ENCODE measurements at regions of chr17 and their contacts with region 1.

Region 1: DNA sequence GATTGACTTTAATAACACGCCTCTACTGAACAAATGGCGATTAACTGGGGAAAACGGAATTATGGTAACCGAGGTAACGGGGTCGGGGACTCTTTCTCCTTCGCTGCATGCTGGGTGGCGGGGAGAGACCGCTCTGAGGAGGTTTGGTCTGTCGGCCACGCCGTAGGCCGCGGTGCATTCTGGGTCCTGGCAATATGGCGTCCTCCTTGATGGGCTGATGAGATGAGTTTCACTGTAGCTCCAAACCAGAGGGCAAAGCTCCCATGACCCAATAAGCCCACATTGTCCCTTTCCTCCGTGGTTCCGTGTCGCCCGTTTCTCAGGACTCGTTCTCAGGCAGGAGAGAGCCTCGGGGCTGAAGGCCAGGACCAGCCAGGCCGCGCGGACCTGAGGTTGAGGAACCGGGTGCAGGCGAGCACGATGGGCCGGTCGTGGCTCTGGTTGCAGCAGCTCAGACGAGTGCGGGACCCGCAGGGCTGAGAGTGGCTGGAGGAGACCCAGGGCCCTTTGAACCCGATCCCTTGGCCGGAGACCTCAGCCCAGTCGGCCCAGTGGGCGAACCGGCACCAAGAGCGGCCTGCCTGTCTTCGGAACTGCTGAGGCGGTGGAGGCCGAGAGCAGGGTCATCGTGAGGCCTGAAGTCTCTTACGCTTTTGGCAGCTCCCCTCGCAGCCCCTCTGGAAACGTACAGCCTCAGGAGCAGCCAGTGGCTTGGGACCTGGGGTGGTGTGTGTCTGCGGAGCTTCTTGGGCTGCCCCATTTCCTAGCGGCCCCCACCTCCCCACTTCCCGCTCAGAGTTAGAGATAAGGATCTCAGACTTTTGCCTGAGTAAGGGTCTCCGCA is at the start of gene RPTOR:
- DNase-seq: peak; percentile 82 to 89 (median 85)
- H3K4me3 ChIP-seq: peak within 1 kb of the TSS; percentile 81 to 85
- H3K4me3 Mint-ChIP-seq: peak within 1 kb of the TSS; percentile 93 to 98 (median 95)
- H3K27ac ChIP-seq: peak within 1 kb of the TSS; percentile 80
- H3K27ac Mint-ChIP-seq: peak within 1 kb of the TSS; percentile 84 to 98 (median 95)
- H3K4me1 ChIP-seq: peaks cover 26% of the 10 kb centered on the region
- H3K4me1 Mint-ChIP-seq: peaks cover 11 to 33% (median 23%) of the 10 kb centered on the region in 4 donors
- H3K27me3 ChIP-seq: no peaks in the 10 kb centered on the region
- H3K27me3 Mint-ChIP-seq: peaks cover 4 to 14% of the 10 kb centered on the region in 2 donors
- total RNA-seq, gene RPTOR: 48.5 to 51.8 TPM

Region 2: GRCh38 chr17:80441133-80441578 is 103.7 kb before region 1 on chr17:
- CTCF ChIA-PET with region 1: no interaction called
- POLR2A ChIA-PET with region 1: no interaction called
- intact Hi-C with region 1: no loop called
- DNase-seq: peak; percentile 40 to 47 (median 43)
- H3K4me3 ChIP-seq: no peak overlapping the region
- H3K4me3 Mint-ChIP-seq: peak overlapping the region in 1 of 8 donors; percentile 45
- H3K27ac ChIP-seq: no peak overlapping the region
- H3K27ac Mint-ChIP-seq: peak overlapping the region in 1 of 7 donors; percentile 9
- H3K4me1 ChIP-seq: no peaks in the 10 kb centered on the region
- H3K4me1 Mint-ChIP-seq: no peaks in the 10 kb centered on the region
- H3K27me3 ChIP-seq: no peaks in the 10 kb centered on the region
- H3K27me3 Mint-ChIP-seq: peaks cover 6 to 11% of the 10 kb centered on the region in 2 donors

Region 3: DNA sequence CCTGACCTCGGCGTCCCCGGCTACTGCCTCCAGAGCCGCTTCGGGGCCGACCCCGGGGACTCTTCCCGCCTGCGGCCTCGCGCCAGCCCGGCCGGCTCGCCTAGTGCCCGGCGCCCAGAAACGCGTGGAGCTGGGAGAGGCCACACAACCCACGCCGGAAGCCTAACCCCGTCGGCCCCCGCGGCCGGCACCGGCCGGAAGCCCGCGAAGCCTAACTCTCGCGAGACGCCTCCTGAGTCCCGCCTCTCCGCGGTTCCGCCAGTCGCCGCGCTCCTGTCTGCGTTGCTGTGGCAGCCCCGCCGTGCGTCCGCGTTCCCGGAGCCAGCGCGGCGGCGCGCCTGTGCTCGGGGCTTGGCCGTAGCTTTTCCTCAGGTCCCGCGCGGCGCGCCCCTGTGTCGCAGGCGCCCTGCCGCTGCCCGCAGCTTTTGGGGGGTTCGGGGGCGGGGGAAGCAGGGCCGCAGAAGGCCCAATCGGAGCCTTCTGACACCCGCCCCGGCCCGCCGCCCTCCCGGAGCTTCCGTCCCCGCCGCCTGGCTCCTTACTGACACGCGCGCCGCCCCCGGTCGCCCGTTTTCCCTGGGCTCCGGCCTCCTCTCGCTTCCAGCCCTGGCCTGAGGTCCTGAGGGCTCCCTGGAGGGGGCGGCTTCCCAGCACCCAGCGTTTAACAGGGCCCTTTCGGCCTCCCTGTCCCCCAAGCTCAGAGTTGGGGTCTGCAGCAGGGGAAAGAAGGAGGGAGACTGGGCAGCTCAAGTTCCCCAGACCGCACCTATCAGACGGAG is 90.1 kb before region 1 on chr17:
- CTCF ChIA-PET with region 1: no interaction called
- POLR2A ChIA-PET with region 1: interaction called, 16 read pairs
- intact Hi-C with region 1: loop called (anchors 1 kb)
- DNase-seq: peak; percentile 92 to 96 (median 95)
- H3K4me3 ChIP-seq: peak overlapping the region; percentile 42 to 66
- H3K4me3 Mint-ChIP-seq: peak overlapping the region; percentile 89 to 93 (median 92)
- H3K27ac ChIP-seq: peak overlapping the region; percentile 93
- H3K27ac Mint-ChIP-seq: peak overlapping the region; percentile 92 to 98 (median 96)
- H3K4me1 ChIP-seq: peaks cover 18% of the 10 kb centered on the region
- H3K4me1 Mint-ChIP-seq: peaks cover 9 to 25% (median 12%) of the 10 kb centered on the region in 4 donors
- H3K27me3 ChIP-seq: no peaks in the 10 kb centered on the region
- H3K27me3 Mint-ChIP-seq: peaks cover 14 to 17% of the 10 kb centered on the region in 2 donors

Region 4: DNA sequence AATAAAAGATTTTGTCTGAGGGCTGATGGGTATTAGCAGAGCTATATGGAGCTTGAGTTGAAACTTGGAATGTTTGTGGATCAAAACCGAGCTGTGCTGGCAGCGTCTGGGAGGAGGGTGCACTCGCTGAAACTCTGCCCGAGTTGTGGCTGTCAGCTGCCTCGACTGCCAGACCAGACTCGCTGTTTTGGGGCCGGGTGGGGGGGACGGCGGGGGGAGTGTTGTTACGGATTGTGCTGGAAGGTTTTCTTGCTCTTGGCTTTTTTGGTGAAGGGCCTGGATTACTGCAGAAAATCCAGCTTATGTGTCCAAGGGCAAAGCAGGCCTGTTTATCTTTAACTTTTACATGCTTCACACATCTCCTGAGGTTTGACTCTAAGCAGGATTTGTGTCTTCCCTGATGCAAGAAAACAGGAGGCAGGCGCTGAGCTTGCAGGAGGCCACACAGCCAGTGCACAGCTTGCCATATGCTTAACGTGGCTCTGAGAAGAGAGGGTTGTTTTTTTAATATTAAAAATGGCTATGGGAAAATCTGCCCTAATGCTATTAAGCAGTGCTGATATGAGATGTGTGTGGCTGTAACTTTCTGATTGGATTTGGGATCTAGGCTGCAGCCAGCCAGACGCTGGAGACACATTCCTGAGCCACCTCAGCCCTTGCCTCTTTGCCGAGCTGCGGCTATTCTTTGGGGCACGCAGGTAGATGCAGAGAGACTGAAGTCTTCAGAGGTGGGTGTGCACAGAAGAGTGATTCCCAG is 20.7 kb before region 1 on chr17:
- CTCF ChIA-PET with region 1: no interaction called
- POLR2A ChIA-PET with region 1: no interaction called
- intact Hi-C with region 1: no loop called
- DNase-seq: no peak
- H3K4me3 ChIP-seq: no peak overlapping the region
- H3K4me3 Mint-ChIP-seq: no peak overlapping the region
- H3K27ac ChIP-seq: no peak overlapping the region
- H3K27ac Mint-ChIP-seq: no peak overlapping the region
- H3K4me1 ChIP-seq: no peaks in the 10 kb centered on the region
- H3K4me1 Mint-ChIP-seq: no peaks in the 10 kb centered on the region
- H3K27me3 ChIP-seq: no peaks in the 10 kb centered on the region
- H3K27me3 Mint-ChIP-seq: peaks cover 8 to 32% of the 10 kb centered on the region in 2 donors